ENCODE measurements at regions of chr10 and their contacts with region 1.

Region 1: GRCh38 chr10:112314822-112315474 is 31.7 kb downstream of the TECTB start:
- DNase-seq: peak; percentile 68
- H3K4me3 ChIP-seq: no peak overlapping the region
- H3K27ac ChIP-seq: no peak overlapping the region
- H3K4me1 ChIP-seq: peaks cover 20% of the 10 kb centered on the region
- H3K27me3 ChIP-seq: no peaks in the 10 kb centered on the region
- CTCF ChIP-seq: peak; percentile 81 to 88
- POLR2A ChIP-seq: no peak

Region 2: GRCh38 chr10:110610308-110610774 is 1704.6 kb before region 1 on chr10:
- CTCF ChIA-PET with region 1: no interaction called
- POLR2A ChIA-PET with region 1: no interaction called
- dilution Hi-C with region 1: no loop called
- intact Hi-C with region 1: loop called (anchors 1 kb)
- DNase-seq: peak; percentile 58
- H3K4me3 ChIP-seq: no peak overlapping the region
- H3K27ac ChIP-seq: no peak overlapping the region
- H3K4me1 ChIP-seq: no peaks in the 10 kb centered on the region
- H3K27me3 ChIP-seq: peaks cover 6 to 10% of the 10 kb centered on the region in 2 experiments
- CTCF ChIP-seq: peak; percentile 68 to 71
- POLR2A ChIP-seq: no peak

Region 3: DNA sequence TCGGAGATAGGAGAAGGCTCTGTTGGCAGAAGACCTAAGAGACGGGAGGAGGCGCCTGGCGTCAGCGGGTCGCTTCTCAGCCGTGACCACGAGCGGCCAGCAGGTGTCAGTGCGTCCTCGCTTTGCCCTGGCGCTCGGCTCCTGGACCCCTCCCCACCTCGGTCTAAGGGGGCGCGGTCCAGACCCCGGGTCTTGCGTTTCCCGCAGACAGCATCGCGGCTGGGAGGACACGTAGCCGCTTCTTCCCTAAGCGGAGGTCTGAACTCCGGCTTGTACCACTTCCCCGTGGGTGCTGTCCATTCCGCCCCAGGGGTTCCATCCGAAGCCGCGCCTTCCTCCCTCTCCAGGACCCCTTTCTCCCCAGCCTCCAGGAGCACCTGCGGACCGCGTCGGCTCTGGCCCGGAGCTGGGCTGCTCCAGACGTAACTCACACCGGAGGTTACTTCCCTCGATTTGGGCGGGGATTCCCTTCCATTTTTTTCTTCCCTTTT is 1238.7 kb before region 1 on chr10:
- CTCF ChIA-PET with region 1: interaction called, 4 read pairs
- POLR2A ChIA-PET with region 1: no interaction called
- dilution Hi-C with region 1: no loop called
- intact Hi-C with region 1: loop called (anchors 2 kb)
- DNase-seq: peak; percentile 41
- H3K4me3 ChIP-seq: peak overlapping the region; percentile 23 to 50 (median 29)
- H3K27ac ChIP-seq: no peak overlapping the region
- H3K4me1 ChIP-seq: peaks cover 17% of the 10 kb centered on the region
- H3K27me3 ChIP-seq: peaks cover 40 to 71% of the 10 kb centered on the region in 2 experiments
- CTCF ChIP-seq: peak; percentile 68 to 92
- POLR2A ChIP-seq: no peak

Region 4: GRCh38 chr10:112183329-112184051 is 131.5 kb before region 1 on chr10 and contains the start of gene GPAM:
- CTCF ChIA-PET with region 1: interaction called, 4 read pairs
- POLR2A ChIA-PET with region 1: no interaction called
- dilution Hi-C with region 1: no loop called
- intact Hi-C with region 1: loop called (anchors 1 kb)
- DNase-seq: peak; percentile 94
- H3K4me3 ChIP-seq: peak within 1 kb of the TSS; percentile 80 to 92 (median 83)
- H3K27ac ChIP-seq: peak within 1 kb of the TSS; percentile 37
- H3K4me1 ChIP-seq: peaks cover 14% of the 10 kb centered on the region
- H3K27me3 ChIP-seq: peaks cover 0 to 2% of the 10 kb centered on the region in 2 experiments
- CTCF ChIP-seq: no peak
- POLR2A ChIP-seq: peak; percentile 88
- total RNA-seq, gene GPAM: 8.2 and 9.7 TPM in 2 replicates

Region 5: GRCh38 chr10:112389147-112389822 is 74.3 kb after region 1 on chr10:
- CTCF ChIA-PET with region 1: no interaction called
- POLR2A ChIA-PET with region 1: no interaction called
- dilution Hi-C with region 1: no loop called
- intact Hi-C with region 1: loop called (anchors 1 kb)
- DNase-seq: peak; percentile 85
- H3K4me3 ChIP-seq: no peak overlapping the region
- H3K27ac ChIP-seq: peak overlapping the region; percentile 85
- H3K4me1 ChIP-seq: peaks cover 18% of the 10 kb centered on the region
- H3K27me3 ChIP-seq: peaks cover 2 to 4% of the 10 kb centered on the region in 2 experiments
- CTCF ChIP-seq: no peak
- POLR2A ChIP-seq: no peak

Measured in endothelial cell of umbilical vein (primary cell).